Posterior vena cava (tissue), 2 donors: ENCODE measurements at regions of chr12 and their contacts with region 1.

Region 1: GRCh38 chr12:10600988-10601387 is 12.4 kb downstream of the MAGOHB start:
- DNase-seq: no peak

Region 2: DNA sequence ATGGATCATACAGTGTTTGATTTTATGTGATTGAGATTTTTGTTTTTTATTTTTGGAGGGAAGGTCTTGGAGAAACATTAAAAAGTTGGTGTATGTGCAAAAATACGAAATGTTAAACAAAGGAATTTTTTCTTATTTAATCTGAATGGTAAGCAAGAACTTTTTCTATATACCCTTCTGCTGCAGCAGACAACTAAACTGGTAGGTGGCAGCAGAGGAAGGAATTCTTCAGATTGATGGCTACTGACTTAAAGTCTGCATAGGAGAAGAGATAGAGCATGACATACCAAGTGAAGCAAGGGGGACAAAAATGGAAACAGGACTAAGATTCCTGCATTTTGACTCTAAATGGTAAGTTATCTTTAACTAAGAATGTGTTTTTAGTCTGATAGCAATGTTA is 1820.6 kb before region 1 on chr12:
- intact Hi-C with region 1: loop called in 1 of 2 experiments (anchors 5 kb)
- DNase-seq: no peak

Region 3: DNA sequence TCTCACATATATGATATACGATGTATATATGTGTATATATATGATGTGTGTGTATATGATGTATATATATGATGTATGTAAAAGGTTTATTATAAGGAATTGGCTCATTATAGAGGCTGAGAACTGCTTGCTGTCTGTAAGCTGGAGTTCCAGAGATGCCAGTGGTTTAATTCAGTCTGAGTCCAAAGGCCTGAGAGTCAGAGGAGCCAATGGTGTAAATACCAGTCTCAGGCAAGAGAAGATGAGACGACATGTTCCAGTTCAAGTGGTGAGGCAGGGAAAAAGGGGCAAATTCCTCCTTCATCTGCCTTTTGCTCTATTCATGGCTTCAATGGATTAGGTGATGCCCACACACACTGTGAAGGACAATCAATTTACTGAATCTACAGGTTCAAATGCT is 89.9 kb after region 1 on chr12:
- intact Hi-C with region 1: no loop called
- DNase-seq: no peak